Activated naive CD4-positive, alpha-beta T cell treated with anti-CD3 and anti-CD28 coated beads, Interleukin-2, amount 10 ng/mL, durations not matched to agents 7 days and 5 days (primary cell): ENCODE measurements at regions of chr16 and their contacts with region 1.

Region 1: DNA sequence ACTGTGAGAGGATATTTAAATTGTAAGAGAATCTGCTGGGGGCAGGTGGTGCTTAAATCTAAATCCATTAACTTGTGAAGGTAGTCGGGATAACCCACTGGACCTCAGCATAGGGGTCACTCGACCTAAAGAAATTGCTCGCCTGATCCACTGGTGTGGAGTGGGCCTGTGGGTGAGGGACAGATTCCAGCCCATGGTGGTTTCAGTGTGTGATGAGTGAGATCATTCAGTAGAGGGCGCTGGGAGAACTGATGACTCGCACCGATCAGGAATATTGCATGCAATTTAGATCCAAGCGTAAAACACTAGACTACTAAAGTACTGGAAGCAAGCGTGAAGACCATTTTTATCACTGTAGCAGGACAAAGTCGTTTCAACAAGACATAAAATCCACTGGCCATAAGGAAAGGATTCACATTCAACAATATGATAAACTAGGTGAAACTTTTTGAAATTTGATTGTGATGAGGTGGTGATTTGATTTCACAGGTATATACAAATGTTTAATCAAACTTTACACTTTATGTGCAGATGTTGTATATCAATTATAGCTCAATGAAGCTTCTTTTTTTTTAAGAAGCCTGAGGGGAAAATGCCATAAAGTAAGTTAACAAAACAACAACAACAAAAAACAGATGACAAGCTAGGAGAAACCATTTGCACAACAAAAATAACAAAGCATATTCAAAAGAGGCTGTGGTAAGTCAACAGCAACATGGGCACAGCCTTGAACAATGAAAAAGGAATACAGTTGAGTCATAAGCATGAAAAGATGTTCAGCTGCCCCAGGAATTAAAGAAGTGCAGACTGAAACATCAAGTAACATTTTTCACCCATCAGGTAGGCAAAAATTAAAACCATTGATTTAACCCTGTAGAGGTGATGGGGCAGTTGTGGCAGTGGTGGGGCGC is 7.5 kb upstream of the TMEM170A start:
- DNase-seq: peak; percentile 54
- H3K4me3 Mint-ChIP-seq: no peak overlapping the region
- H3K27ac Mint-ChIP-seq: no peak overlapping the region
- H3K4me1 Mint-ChIP-seq: no peaks in the 10 kb centered on the region
- H3K27me3 Mint-ChIP-seq: peaks cover 6% of the 10 kb centered on the region

Region 2: DNA sequence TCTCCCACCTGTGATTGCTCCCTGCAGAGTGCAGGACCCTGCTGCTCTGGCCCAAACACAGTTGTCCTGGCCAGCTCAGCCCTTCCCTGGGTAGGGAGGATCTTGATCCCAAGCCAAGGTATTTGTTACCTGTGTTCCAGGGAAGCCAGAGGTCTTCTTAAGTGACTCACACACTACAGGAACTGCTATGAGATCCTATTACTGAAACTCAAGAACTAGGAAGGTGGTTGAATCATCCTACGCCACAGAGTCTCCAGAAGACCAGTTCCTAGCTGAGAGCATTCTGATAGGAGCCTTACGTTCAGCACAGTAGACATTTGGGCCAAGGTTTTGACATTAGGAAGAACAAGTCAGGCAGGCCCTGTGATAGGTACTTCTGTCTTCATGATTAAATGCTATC is 11.2 kb after region 1 on chr16:
- CTCF ChIA-PET with region 1: interaction called, 12 read pairs
- DNase-seq: no peak
- H3K4me3 Mint-ChIP-seq: no peak overlapping the region
- H3K27ac Mint-ChIP-seq: no peak overlapping the region
- H3K4me1 Mint-ChIP-seq: no peaks in the 10 kb centered on the region
- H3K27me3 Mint-ChIP-seq: peaks cover 29% of the 10 kb centered on the region

Region 3: GRCh38 chr16:75519881-75520280 is 47.9 kb after region 1 on chr16:
- CTCF ChIA-PET with region 1: interaction called, 11 read pairs
- DNase-seq: no peak
- H3K4me3 Mint-ChIP-seq: no peak overlapping the region
- H3K27ac Mint-ChIP-seq: no peak overlapping the region
- H3K4me1 Mint-ChIP-seq: peaks cover 12% of the 10 kb centered on the region
- H3K27me3 Mint-ChIP-seq: peaks cover 18% of the 10 kb centered on the region

Region 4: GRCh38 chr16:75550211-75550662 is 78.3 kb after region 1 on chr16:
- CTCF ChIA-PET with region 1: interaction called, 32 read pairs
- DNase-seq: peak; percentile 57
- H3K4me3 Mint-ChIP-seq: no peak overlapping the region
- H3K27ac Mint-ChIP-seq: no peak overlapping the region
- H3K4me1 Mint-ChIP-seq: peaks cover 19% of the 10 kb centered on the region
- H3K27me3 Mint-ChIP-seq: peaks cover 23% of the 10 kb centered on the region

Region 5: GRCh38 chr16:75622761-75623605 is 151.0 kb after region 1 on chr16 and contains the start of gene ADAT1:
- CTCF ChIA-PET with region 1: interaction called, 11 read pairs
- DNase-seq: peak; percentile 99
- H3K4me3 Mint-ChIP-seq: peak within 1 kb of the TSS; percentile 92
- H3K27ac Mint-ChIP-seq: peak within 1 kb of the TSS; percentile 95
- H3K4me1 Mint-ChIP-seq: peaks cover 51% of the 10 kb centered on the region
- H3K27me3 Mint-ChIP-seq: no peaks in the 10 kb centered on the region

Region 6: GRCh38 chr16:75764154-75764768 is 292.3 kb after region 1 on chr16:
- CTCF ChIA-PET with region 1: interaction called, 25 read pairs
- DNase-seq: peak; percentile 76
- H3K4me3 Mint-ChIP-seq: no peak overlapping the region
- H3K27ac Mint-ChIP-seq: no peak overlapping the region
- H3K4me1 Mint-ChIP-seq: peaks cover 6% of the 10 kb centered on the region
- H3K27me3 Mint-ChIP-seq: peaks cover 5% of the 10 kb centered on the region